ENCODE measurements at regions of chr10 and their contacts with region 1.

Region 1: DNA sequence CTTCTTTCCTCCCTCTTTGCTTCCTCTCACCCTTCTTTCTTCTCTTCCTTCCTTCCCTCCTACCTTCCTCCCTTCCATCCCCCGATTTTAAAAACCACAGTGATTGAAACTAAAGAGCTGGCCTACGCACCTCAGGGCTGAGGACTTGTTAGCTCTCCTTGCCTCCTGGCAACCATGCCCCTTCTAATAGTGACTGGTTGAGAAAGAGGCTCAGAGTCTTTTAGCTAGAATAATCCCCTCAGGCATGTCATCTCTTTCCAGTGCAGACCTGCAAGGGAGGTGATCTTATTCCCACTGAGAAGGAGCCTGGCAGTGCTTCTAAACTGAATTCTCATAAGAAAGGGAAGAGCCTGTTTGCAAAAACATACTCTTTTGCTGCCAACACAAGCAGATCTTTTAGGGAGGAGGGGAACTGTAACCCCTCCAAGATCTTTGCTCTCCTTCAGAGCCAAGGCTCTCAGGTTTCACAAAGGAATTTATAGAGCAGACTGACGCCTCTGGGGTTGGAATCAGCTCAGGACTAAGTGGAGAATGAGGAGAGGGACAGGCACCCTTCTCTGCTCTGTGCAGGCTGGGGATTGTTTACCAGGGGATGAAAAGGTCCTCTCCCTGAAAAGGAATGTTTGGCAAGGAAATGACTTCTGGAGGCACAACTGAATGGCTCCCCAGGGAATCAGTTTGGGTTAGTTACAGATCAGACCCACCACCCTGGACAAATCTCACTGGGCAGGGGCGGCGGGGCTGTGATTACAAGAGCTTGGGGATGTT is 9.4 kb upstream of the ANKRD1 start:
- DNase-seq: no peak
- ATAC-seq: peak; percentile 91

Region 2: DNA sequence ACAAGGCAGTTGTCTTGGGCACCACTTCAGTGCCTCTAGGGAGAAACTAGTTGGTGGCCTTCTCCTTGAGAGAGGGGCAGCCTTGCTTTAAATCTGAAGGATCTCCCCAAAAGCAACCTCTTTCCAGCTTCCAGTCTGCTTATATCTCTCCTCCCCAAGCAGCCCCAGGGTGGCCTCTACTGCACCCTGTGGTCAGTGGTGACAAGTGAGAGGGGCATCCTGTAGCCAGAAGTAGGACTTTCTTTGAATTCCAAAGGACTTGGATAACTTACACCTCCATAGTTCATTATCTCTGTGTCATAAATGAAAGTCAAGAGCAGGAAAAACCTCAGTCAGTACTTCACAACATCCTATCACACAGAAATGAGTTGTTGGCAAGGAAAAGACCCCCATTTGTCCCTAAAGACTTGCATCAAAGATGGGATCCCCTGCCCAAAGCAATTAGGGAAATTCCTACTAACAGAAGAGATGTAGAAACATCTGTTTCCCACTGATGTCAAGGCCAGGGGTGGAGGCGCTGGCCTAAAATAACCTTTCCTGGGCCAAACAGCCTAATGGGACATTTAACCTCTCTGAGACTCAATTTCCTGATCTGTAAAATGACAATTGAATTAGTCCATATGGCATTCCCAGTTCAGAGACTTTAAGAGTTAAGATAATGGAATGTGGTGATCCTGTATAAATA is 34.7 kb after region 1 on chr10:
- intact Hi-C with region 1: loop called (anchors 2 kb)
- DNase-seq: no peak
- ATAC-seq: peak; percentile 51

Region 3: GRCh38 chr10:91077549-91078071 is 147.4 kb after region 1 on chr10:
- intact Hi-C with region 1: loop called (anchors 2 kb)
- DNase-seq: peak; percentile 86
- ATAC-seq: peak; percentile 87